ENCODE measurements at regions of chr5 and their contacts with region 1.

Region 1: DNA sequence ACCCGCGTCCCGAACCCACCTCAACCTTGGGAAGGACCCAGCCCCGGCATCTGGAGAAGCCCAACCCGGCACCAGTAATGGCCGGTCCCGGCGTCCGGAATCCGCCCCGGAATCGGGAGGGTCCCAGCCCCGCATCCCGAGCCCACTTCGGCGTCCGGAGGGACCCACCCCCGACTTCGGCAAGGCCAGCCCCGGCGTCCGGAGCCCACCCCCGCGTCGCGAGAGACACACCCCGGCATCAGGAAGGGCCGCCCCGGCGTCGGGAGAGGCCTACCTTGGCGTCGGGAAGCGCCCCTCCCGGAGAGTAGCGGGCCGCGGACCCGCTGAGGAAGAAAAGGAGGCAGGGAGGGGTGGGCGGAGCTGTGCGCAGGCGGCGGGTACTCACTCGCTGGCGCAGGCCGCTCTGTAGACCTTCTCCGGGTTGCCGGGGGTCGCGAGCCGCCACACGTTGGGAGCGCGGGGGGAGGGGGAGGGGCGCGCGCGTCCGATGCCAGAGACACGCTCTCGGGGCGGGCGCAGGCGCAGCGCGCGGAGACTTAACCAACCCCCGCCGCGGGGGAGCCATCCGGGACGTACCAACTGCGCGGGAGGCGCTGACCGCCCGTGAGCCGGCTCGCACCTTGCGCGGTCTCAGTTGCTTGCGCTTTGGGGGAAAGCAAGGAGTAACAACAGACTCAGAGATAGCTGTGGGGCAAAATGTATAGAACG is at the start of gene UIMC1:
- DNase-seq: peak; percentile 96
- ATAC-seq: peak; percentile 90
- H3K4me3 ChIP-seq: peak within 1 kb of the TSS; percentile 74 to 100 (median 95)
- H3K4me3 Mint-ChIP-seq: peak within 1 kb of the TSS; percentile 96
- H3K27ac ChIP-seq: peak within 1 kb of the TSS; percentile 90 to 94
- H3K27ac Mint-ChIP-seq: peak within 1 kb of the TSS; percentile 96
- H3K4me1 ChIP-seq: peaks cover 19 to 29% of the 10 kb centered on the region in 2 donors
- H3K4me1 Mint-ChIP-seq: peaks cover 32% of the 10 kb centered on the region
- H3K27me3 ChIP-seq: no peaks in the 10 kb centered on the region
- H3K27me3 Mint-ChIP-seq: no peaks in the 10 kb centered on the region
- CTCF ChIP-seq: no peak
- total RNA-seq, gene UIMC1: 83.5 and 98.1 TPM in 2 replicates

Region 2: DNA sequence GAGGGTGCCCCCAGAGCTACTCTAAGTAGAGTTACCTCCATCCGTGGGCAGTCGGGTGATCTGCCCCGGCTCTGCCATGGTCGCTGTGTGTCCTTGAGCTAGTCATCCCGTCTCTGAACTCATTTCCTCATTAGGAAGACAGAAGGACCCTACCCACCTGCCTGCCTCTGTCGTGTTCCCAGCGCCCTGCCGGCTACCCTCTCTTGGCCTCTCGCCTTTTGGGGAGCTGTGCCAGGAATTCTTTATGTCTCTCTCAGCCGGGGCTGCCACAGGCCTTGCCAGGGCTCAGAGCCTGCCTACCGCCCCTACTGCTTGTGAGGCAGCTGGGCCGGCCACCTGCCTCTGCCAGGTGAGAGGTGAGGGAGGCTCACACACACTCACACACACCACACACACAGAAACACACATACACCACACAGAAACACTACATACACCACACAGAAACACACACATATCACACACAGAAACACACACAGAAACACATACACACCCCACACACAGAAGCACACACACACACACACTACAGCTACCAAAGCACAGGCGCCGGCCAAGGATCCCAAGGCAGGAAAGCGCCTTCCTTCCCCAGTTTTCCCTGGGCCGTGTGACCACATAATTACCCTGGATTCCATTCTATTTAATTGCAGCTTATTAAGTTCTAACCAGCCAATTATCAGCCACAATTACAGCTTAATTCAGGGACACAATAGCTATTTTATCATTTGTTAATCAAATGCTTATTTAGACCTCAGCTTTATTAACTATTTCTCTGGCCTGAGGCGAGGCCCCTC is 154.4 kb before region 1 on chr5:
- CTCF ChIA-PET with region 1: no interaction called
- POLR2A ChIA-PET with region 1: no interaction called
- intact Hi-C with region 1: no loop called
- DNase-seq: no peak
- ATAC-seq: no peak
- H3K4me3 ChIP-seq: no peak overlapping the region
- H3K4me3 Mint-ChIP-seq: no peak overlapping the region
- H3K27ac ChIP-seq: no peak overlapping the region
- H3K27ac Mint-ChIP-seq: no peak overlapping the region
- H3K4me1 ChIP-seq: no peaks in the 10 kb centered on the region
- H3K4me1 Mint-ChIP-seq: no peaks in the 10 kb centered on the region
- H3K27me3 ChIP-seq: peaks cover 0 to 3% (median 0%) of the 10 kb centered on the region in 4 experiments
- H3K27me3 Mint-ChIP-seq: peaks cover 28% of the 10 kb centered on the region
- CTCF ChIP-seq: no peak

Region 3: GRCh38 chr5:176916337-176916736 is 90.1 kb before region 1 on chr5:
- CTCF ChIA-PET with region 1: no interaction called
- POLR2A ChIA-PET with region 1: no interaction called
- intact Hi-C with region 1: no loop called
- DNase-seq: no peak
- ATAC-seq: no peak
- H3K4me3 ChIP-seq: no peak overlapping the region
- H3K4me3 Mint-ChIP-seq: no peak overlapping the region
- H3K27ac ChIP-seq: no peak overlapping the region
- H3K27ac Mint-ChIP-seq: no peak overlapping the region
- H3K4me1 ChIP-seq: no peaks in the 10 kb centered on the region
- H3K4me1 Mint-ChIP-seq: no peaks in the 10 kb centered on the region
- H3K27me3 ChIP-seq: no peaks in the 10 kb centered on the region
- H3K27me3 Mint-ChIP-seq: no peaks in the 10 kb centered on the region
- CTCF ChIP-seq: no peak

Region 4: GRCh38 chr5:176994460-176995121 is 11.8 kb before region 1 on chr5:
- CTCF ChIA-PET with region 1: interaction called, 23 read pairs
- POLR2A ChIA-PET with region 1: interaction called, 4 read pairs
- intact Hi-C with region 1: no loop called
- DNase-seq: peak; percentile 85
- ATAC-seq: peak; percentile 95
- H3K4me3 ChIP-seq: peak overlapping the region in 2 of 5 experiments; percentile 30 to 52
- H3K4me3 Mint-ChIP-seq: peak overlapping the region; percentile 79
- H3K27ac ChIP-seq: peak overlapping the region; percentile 85 to 90
- H3K27ac Mint-ChIP-seq: peak overlapping the region; percentile 95
- H3K4me1 ChIP-seq: peaks cover 61 to 64% of the 10 kb centered on the region in 2 donors
- H3K4me1 Mint-ChIP-seq: peaks cover 61% of the 10 kb centered on the region
- H3K27me3 ChIP-seq: no peaks in the 10 kb centered on the region
- H3K27me3 Mint-ChIP-seq: no peaks in the 10 kb centered on the region
- CTCF ChIP-seq: no peak